ENCODE measurements at regions of chr5 and their contacts with region 1.

Region 1: DNA sequence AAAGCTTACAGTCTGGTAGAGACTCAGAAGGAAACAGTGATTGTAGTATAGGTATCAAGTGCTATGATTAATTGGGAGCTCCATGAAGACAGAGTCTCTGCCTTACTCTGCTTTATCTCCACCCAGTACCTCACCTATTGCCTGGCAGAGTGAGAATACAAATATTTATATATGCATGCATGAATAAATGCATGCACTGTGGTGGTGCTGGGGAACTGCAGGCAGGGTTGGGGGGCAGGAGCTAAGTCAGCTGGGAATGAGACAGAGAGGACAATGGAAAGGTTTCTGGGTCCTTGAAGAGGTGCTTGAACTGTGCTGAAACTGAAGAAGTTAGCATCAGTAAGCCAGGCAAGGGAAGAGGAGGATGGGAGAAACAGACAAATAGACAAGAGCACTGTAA is 80.8 kb upstream of the PPP2R2B start:
- DNase-seq: no peak
- ATAC-seq: no peak
- H3K4me3 Mint-ChIP-seq: no peak overlapping the region
- H3K27ac Mint-ChIP-seq: no peak overlapping the region
- H3K4me1 Mint-ChIP-seq: no peaks in the 10 kb centered on the region
- H3K27me3 Mint-ChIP-seq: peaks cover 4% of the 10 kb centered on the region

Region 2: GRCh38 chr5:146533260-146533857 is 426.0 kb before region 1 on chr5:
- CTCF ChIA-PET with region 1: interaction called, 32 read pairs
- POLR2A ChIA-PET with region 1: no interaction called
- DNase-seq: peak; percentile 86
- ATAC-seq: peak; percentile 94
- H3K4me3 Mint-ChIP-seq: no peak overlapping the region
- H3K27ac Mint-ChIP-seq: no peak overlapping the region
- H3K4me1 Mint-ChIP-seq: peaks cover 16% of the 10 kb centered on the region
- H3K27me3 Mint-ChIP-seq: peaks cover 4% of the 10 kb centered on the region

Region 3: GRCh38 chr5:146680830-146681572 is 278.4 kb before region 1 on chr5:
- CTCF ChIA-PET with region 1: no interaction called
- POLR2A ChIA-PET with region 1: no interaction called
- DNase-seq: no peak
- ATAC-seq: no peak
- H3K4me3 Mint-ChIP-seq: no peak overlapping the region
- H3K27ac Mint-ChIP-seq: no peak overlapping the region
- H3K4me1 Mint-ChIP-seq: no peaks in the 10 kb centered on the region
- H3K27me3 Mint-ChIP-seq: peaks cover 4% of the 10 kb centered on the region

Region 4: GRCh38 chr5:146890733-146891440 is 68.5 kb before region 1 on chr5:
- CTCF ChIA-PET with region 1: no interaction called
- POLR2A ChIA-PET with region 1: no interaction called
- DNase-seq: no peak
- ATAC-seq: no peak
- H3K4me3 Mint-ChIP-seq: no peak overlapping the region
- H3K27ac Mint-ChIP-seq: no peak overlapping the region
- H3K4me1 Mint-ChIP-seq: peaks cover 5% of the 10 kb centered on the region
- H3K27me3 Mint-ChIP-seq: peaks cover 5% of the 10 kb centered on the region